Activated CD4-positive, alpha-beta memory T cell treated with anti-CD3 and anti-CD28 coated beads for 36 hours (primary cell): ENCODE measurements at regions of chr10 and their contacts with region 1.

Region 1: GRCh38 chr10:30027057-30028005 is 32.1 kb downstream of the JCAD start:
- DNase-seq: peak; percentile 95
- H3K4me3 Mint-ChIP-seq: peak overlapping the region; percentile 67
- H3K27ac Mint-ChIP-seq: peak overlapping the region; percentile 65
- H3K4me1 Mint-ChIP-seq: peaks cover 40% of the 10 kb centered on the region
- H3K27me3 Mint-ChIP-seq: peaks cover 47% of the 10 kb centered on the region

Region 2: GRCh38 chr10:30013757-30014156 is 13.6 kb before region 1 on chr10:
- CTCF ChIA-PET with region 1: interaction called, 5 read pairs
- POLR2A ChIA-PET with region 1: no interaction called
- intact Hi-C with region 1: loop called (anchors 1 kb)
- DNase-seq: no peak
- H3K4me3 Mint-ChIP-seq: no peak overlapping the region
- H3K27ac Mint-ChIP-seq: no peak overlapping the region
- H3K4me1 Mint-ChIP-seq: peaks cover 5% of the 10 kb centered on the region
- H3K27me3 Mint-ChIP-seq: peaks cover 36% of the 10 kb centered on the region

Region 3: DNA sequence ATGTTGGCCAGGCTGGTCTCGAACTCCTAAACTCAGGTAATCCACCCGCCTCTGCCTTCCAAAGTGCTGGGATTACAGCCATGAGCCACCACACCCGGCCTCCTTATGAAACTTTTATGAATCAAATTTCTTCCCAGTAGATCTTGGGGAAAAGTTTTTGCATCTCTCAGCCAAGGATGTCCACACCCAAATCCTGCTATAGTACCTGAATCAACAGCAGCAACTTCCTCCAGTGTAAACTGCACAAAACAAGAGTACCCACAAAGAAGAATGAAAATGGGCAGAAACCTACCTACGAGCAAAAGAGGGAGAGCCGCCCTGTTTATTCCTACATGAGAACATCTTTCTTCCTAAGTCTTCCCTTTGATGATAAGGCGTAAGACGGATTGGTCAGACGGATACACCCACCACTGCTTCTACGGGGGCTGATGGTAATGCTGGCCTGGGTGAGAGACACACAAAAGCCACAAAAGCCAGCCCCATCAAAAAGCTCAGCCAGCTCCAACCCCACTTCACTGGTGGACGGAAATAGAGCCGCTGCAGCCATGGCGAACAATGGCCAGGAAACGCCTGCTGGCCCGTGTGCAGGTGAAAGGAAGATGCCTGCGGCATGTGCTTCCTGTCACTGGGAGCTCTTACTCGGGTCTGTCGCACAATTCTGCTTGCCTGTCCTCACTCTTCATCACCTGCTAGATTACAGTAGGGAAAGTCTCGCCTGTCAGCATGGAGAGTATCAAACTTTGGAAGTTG is 21.6 kb after region 1 on chr10:
- CTCF ChIA-PET with region 1: interaction called, 4 read pairs
- POLR2A ChIA-PET with region 1: interaction called, 6 read pairs
- intact Hi-C with region 1: loop called (anchors 2 kb)
- DNase-seq: no peak
- H3K4me3 Mint-ChIP-seq: peak overlapping the region; percentile 30
- H3K27ac Mint-ChIP-seq: no peak overlapping the region
- H3K4me1 Mint-ChIP-seq: peaks cover 18% of the 10 kb centered on the region
- H3K27me3 Mint-ChIP-seq: peaks cover 55% of the 10 kb centered on the region

Region 4: DNA sequence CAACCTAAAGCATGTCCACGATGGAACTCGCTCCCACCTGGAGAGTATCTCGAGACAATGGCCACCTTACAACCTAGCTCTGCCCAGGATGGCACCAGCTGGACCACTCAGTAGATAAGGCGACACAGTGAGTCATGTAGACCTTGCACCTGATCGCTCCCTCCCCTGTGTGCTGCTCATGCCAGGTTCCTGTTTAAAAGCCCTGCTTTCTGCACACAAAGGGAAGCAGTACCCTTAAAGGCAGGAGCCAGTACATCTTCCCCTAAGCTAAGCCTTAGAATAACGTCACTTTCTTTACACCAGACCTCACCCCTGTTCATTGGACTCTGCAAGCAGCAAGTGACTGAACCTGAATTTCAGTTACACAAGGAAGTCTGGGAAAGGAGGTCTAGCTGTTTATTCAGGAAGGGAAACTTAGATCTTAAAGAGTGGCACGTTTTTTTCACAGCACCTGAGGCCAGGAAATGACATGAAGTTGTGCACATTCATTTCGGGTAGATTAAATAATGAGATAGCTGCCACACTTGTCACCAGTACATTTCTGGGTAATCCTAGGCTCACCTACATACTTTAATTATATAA is 203.8 kb after region 1 on chr10:
- CTCF ChIA-PET with region 1: no interaction called
- POLR2A ChIA-PET with region 1: no interaction called
- intact Hi-C with region 1: loop called (anchors 1 kb)
- DNase-seq: peak; percentile 25
- H3K4me3 Mint-ChIP-seq: no peak overlapping the region
- H3K27ac Mint-ChIP-seq: no peak overlapping the region
- H3K4me1 Mint-ChIP-seq: peaks cover 17% of the 10 kb centered on the region
- H3K27me3 Mint-ChIP-seq: peaks cover 6% of the 10 kb centered on the region